G401 (cell line): ENCODE measurements at regions of chr17 and their contacts with region 1.

Region 1: GRCh38 chr17:39244600-39245570 is 19.1 kb upstream of the STAC2 start:
- DNase-seq: peak; percentile 92

Region 2: DNA sequence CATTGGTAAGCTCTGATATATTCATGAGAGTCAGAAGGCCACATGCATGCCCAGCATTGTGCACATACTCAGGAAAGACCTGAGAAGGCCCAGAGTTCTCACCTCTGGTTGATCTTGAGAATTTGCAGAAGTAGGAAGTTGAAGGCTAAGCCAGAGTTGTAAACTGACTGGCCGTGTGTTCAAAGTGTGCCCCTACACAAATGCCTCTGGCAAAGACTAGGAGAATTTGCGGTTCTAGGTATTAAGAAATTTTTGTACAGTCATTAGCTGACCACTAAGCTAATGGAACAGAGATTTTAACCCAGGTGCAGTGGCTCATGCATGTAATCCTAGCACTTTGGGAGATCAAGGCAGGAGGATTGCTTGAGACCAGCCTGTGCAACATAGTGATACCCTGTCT is 131.5 kb after region 1 on chr17:
- in situ Hi-C with region 1: loop called (anchors 10 kb)
- DNase-seq: no peak